Heart left ventricle (tissue), 16 donors: ENCODE measurements at regions of chr9 and their contacts with region 1.

Region 1: GRCh38 chr9:84953797-84954705 is 284.5 kb downstream of the NTRK2 start:
- DNase-seq: peak; percentile 71 to 84 (median 76)
- ATAC-seq: peak; percentile 89 to 99 (median 94)
- H3K4me3 ChIP-seq: no peak overlapping the region
- H3K27ac ChIP-seq: peak overlapping the region in 1 of 12 donors; percentile 13
- H3K4me1 ChIP-seq: peaks cover 0 to 24% (median 2%) of the 10 kb centered on the region in 12 donors
- H3K27me3 ChIP-seq: no peaks in the 10 kb centered on the region
- CTCF ChIP-seq: peak; percentile 91 to 98 (median 95)
- POLR2A ChIP-seq: no peak

Region 2: DNA sequence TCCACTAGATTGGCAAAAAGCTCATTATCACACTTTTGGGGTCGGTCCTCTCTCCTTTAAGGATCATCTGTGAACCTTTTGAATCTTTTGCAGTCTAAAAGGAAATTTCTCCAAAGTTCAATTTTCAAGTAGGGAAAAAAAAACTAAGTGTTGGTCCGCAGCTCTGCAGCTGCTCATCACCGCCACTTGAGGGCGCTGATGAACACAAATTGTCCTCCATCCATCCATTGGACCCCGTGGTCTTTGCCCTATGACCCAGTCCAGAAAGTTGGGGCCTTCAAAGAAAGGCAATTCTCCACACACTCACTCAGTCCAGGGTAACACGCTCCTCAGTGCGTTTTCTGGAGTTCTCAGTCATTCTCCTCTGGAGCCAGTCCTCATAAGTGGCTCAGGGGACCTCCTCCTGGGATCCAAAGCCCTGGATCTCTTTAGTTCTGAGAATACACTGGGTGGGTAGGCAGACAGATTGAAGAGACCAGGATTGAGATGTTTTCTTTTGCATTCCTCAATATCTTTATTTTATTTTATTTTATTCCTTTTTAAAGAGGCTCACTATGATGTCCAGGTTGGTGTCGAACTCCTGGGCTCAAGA is 549.9 kb before region 1 on chr9:
- intact Hi-C with region 1: loop called in 9 of 10 experiments (anchors 5 to 10 kb)
- DNase-seq: no peak
- ATAC-seq: no peak
- H3K4me3 ChIP-seq: no peak overlapping the region
- H3K27ac ChIP-seq: no peak overlapping the region
- H3K4me1 ChIP-seq: no peaks in the 10 kb centered on the region
- H3K27me3 ChIP-seq: no peaks in the 10 kb centered on the region
- CTCF ChIP-seq: peak; percentile 43 to 64 (median 56)
- POLR2A ChIP-seq: no peak

Region 3: DNA sequence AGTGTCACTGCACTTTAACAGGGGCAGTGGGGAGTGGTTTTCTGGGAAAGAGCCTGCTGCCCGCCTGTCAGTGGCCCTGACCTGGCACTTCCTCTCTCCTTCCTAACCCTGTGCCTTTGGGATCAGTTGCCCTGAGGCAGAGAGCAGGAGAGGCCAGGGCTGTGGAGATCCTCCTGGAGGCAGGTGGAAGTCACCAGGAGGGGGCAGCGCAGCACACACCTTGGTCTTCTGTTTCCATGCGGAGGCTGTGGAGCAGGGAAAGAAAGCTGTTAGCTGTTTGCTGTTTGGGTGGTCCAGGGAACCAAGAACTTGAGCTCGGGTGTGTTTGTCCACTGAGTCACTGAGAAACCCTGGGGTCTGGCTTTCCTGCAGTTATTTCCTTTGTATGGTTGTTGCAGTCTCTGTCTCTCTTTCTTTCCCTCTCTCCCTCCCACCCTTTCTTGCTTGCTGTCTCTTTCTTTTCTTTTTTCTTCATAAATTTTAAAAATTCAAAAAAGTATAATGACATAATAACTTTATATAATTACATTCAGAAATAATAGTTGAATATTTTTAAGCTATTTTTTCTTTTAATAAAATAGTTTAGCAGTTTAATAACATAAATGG is 256.4 kb before region 1 on chr9:
- intact Hi-C with region 1: loop called (anchors 1 to 5 kb)
- DNase-seq: peak; percentile 47 to 79 (median 69)
- ATAC-seq: peak; percentile 64 to 86 (median 80)
- H3K4me3 ChIP-seq: no peak overlapping the region
- H3K27ac ChIP-seq: no peak overlapping the region
- H3K4me1 ChIP-seq: peaks cover 0 to 5% (median 0%) of the 10 kb centered on the region in 12 donors
- H3K27me3 ChIP-seq: no peaks in the 10 kb centered on the region
- CTCF ChIP-seq: peak; percentile 36 to 80 (median 68)
- POLR2A ChIP-seq: no peak

Region 4: DNA sequence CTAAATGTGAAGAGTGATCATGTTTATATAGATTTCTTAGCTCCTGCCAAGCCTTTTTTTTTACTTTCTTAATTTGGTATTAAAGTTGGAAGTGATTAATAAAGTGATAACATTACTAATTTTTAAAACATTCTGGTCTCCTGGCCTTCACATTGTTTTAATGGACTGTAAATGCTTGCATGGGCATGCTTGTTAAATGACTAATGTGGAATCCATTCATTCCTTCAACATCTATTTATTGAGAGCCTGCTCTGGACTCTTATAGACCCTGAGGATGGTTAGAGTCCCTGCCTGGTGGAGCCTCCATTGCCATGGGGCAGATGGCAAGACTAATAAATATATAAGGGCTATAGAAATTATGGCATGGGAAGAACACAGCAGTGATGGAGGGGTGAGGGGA is 181.0 kb before region 1 on chr9:
- intact Hi-C with region 1: no loop called
- DNase-seq: no peak
- ATAC-seq: no peak
- H3K4me3 ChIP-seq: no peak overlapping the region
- H3K27ac ChIP-seq: no peak overlapping the region
- H3K4me1 ChIP-seq: peaks cover 0 to 3% (median 0%) of the 10 kb centered on the region in 12 donors
- H3K27me3 ChIP-seq: no peaks in the 10 kb centered on the region
- CTCF ChIP-seq: no peak
- POLR2A ChIP-seq: no peak

Region 5: DNA sequence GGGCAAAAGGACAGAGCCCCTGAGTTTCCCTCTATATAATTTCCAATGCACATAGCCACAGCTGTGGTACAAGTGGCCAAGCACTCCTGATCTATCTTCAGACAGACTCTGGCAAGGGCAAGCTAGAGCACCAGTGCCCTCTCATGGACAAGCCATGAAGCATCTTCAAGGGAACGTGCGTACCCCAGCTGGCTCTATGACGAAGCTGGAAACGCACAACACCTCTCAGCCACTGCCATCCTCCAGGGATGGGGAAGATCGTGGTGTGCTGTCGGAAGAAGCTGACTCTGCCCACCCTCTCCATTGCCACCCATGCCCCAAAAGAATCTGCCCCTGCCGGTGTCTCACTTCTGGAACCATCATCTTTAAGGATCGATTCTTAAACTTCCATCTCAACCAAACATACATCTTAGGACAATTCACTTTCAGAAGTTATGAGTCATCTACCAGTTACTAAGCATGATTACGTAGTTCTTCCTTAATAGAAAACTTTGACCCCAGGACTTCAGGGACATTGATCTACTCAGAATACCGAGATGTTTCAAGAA is 304.8 kb after region 1 on chr9:
- intact Hi-C with region 1: loop called in 2 of 10 experiments (anchors 5 to 10 kb)
- DNase-seq: peak in 4 of 5 donors; percentile 22 to 53 (median 45)
- ATAC-seq: peak; percentile 77 to 88 (median 87)
- H3K4me3 ChIP-seq: no peak overlapping the region
- H3K27ac ChIP-seq: no peak overlapping the region
- H3K4me1 ChIP-seq: peaks cover 0 to 6% (median 0%) of the 10 kb centered on the region in 12 donors
- H3K27me3 ChIP-seq: peaks cover 0 to 7% (median 0%) of the 10 kb centered on the region in 9 donors
- CTCF ChIP-seq: peak; percentile 42 to 74 (median 67)
- POLR2A ChIP-seq: no peak